ENCODE measurements at regions of chr13 and their contacts with region 1.

Region 1: GRCh38 chr13:97257800-97258799 is 36.0 kb downstream of the MBNL2 start:
- DNase-seq: peak; percentile 45
- H3K4me3 Mint-ChIP-seq: peak overlapping the region; percentile 40
- H3K27ac Mint-ChIP-seq: peak overlapping the region; percentile 76
- H3K4me1 Mint-ChIP-seq: peaks cover 80% of the 10 kb centered on the region
- H3K27me3 Mint-ChIP-seq: no peaks in the 10 kb centered on the region

Region 2: DNA sequence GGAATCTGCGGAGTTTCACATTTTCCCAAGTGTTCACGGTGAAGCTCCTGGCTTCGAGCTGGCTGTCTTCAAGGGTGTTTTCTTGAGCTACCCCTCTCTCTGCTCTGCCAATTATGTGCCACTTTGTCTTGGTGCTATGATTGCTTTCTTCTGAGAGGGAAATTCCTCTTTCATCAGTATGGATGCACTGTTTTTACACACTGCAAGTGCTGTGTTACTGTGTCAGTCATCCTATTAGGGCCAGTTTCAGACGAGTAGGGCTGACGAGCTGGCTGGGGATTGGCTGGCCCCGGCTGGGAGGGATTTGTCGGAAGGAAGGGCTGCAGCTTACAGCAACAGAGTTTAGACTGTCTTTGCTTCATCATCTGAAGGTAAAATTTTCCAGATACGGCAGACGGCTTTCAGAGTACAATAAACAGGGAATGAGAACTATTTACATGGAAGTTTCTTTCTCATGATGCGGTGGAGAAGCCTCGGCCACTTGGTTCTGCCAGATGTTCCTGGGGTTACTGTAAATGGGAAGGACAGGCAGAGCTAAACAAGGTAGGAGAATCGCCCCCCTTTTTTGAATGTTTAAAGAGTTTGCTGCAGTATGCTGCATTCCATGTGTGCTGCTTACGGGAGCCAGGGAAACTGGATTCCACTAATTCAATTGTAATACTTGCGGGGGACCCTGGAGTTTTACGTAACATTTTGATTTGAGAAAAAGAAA is 36.0 kb before region 1 on chr13 and contains the start of gene MBNL2:
- CTCF ChIA-PET with region 1: interaction called, 8 read pairs
- POLR2A ChIA-PET with region 1: interaction called, 56 read pairs
- intact Hi-C with region 1: loop called (anchors 1 kb)
- DNase-seq: peak; percentile 93
- H3K4me3 Mint-ChIP-seq: peak within 1 kb of the TSS; percentile 81
- H3K27ac Mint-ChIP-seq: peak within 1 kb of the TSS; percentile 91
- H3K4me1 Mint-ChIP-seq: peaks cover 31% of the 10 kb centered on the region
- H3K27me3 Mint-ChIP-seq: no peaks in the 10 kb centered on the region
- total RNA-seq, gene MBNL2: 23.4 to 24.6 TPM

Region 3: GRCh38 chr13:97276862-97277269 is 18.8 kb after region 1 on chr13:
- CTCF ChIA-PET with region 1: no interaction called
- POLR2A ChIA-PET with region 1: interaction called, 4 read pairs
- intact Hi-C with region 1: loop called (anchors 1 kb)
- DNase-seq: no peak
- H3K4me3 Mint-ChIP-seq: no peak overlapping the region
- H3K27ac Mint-ChIP-seq: peak overlapping the region; percentile 2
- H3K4me1 Mint-ChIP-seq: peaks cover 52% of the 10 kb centered on the region
- H3K27me3 Mint-ChIP-seq: no peaks in the 10 kb centered on the region

Region 4: DNA sequence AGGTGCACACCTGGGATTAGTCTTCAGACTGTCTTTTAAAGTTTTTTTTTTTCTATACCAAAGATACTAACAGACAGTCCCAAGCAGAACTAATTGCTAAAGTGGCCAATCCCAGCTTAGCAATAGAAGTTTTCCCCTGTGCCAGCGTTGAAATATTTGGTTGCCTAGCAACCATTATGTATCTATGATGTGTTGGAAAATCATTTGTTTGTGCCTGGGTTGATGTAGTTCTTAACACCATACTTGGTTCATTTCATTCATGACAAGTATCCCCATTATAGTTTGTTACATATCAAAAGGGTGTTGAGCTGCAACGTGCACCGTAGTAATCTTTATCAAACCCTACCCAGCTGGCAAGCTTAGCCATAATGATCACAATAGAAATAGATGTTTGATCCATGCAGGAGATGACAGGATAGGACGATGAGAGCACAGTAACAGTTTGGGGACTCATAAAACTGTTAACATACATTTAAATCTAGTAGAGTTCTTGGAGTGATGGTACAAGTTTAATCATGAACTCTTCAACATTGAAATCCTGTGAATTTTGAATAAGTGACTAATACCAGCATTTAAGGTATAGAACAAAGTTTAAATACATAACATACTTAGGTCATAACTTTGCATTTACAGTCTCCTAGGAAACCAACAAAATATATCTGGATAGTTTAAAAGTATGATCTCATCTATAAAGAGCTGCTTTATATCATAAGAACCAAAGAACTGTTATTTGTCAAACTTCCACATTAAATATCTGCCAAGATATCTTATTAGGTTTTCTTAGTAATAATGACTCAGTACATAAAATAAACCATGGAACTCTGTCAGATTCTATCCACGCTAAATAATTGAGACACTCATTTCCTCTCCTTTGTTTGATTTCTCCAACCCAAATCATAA is 37.4 kb after region 1 on chr13:
- CTCF ChIA-PET with region 1: no interaction called
- POLR2A ChIA-PET with region 1: no interaction called
- intact Hi-C with region 1: loop called (anchors 1 kb)
- DNase-seq: no peak
- H3K4me3 Mint-ChIP-seq: no peak overlapping the region
- H3K27ac Mint-ChIP-seq: no peak overlapping the region
- H3K4me1 Mint-ChIP-seq: peaks cover 46% of the 10 kb centered on the region
- H3K27me3 Mint-ChIP-seq: no peaks in the 10 kb centered on the region

Region 5: GRCh38 chr13:97911311-97912128 is 653.4 kb after region 1 on chr13:
- CTCF ChIA-PET with region 1: no interaction called
- POLR2A ChIA-PET with region 1: no interaction called
- intact Hi-C with region 1: no loop called
- DNase-seq: peak; percentile 38
- H3K4me3 Mint-ChIP-seq: no peak overlapping the region
- H3K27ac Mint-ChIP-seq: no peak overlapping the region
- H3K4me1 Mint-ChIP-seq: no peaks in the 10 kb centered on the region
- H3K27me3 Mint-ChIP-seq: peaks cover 16% of the 10 kb centered on the region